ENCODE measurements at regions of chrX and their contacts with region 1.

Region 1: DNA sequence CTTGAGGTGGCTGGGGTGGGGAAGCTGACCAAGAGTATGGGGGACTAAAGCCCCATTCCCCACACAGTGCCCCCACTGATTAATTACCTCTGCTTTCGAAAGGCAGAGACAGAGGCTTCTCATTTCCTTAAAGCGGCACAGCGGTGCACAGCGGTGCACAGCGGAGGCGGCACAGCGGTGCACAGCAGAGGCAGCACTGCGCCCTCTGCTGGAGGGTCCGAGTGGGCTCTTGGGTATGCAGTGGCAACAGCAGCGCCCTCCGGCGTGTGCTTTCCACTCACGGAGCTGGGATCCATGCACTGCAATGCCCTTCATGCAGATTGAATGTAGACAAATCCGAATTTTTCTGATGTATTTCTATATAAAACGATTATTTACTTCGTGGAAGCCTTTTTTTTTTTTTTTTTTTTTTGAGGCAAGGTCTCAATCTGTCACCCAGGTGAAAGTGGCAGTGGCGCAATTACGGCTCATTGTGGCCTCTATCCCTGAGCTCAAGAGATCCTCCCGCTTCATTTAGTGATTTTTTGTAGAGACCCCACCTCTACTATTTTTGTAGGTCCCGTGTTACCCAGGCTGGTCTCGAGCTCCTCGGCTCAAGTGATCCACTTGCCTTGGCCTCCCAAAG is 19.7 kb upstream of the PRPS2 start:
- H3K4me3 ChIP-seq: no peak overlapping the region
- H3K27ac ChIP-seq: no peak overlapping the region
- H3K4me1 ChIP-seq: no peaks in the 10 kb centered on the region
- CTCF ChIP-seq: peak; percentile 88

Region 2: GRCh38 chrX:12080265-12080664 is 691.3 kb before region 1 on chrX:
- CTCF ChIA-PET with region 1: interaction called, 14 read pairs
- POLR2A ChIA-PET with region 1: no interaction called
- H3K4me3 ChIP-seq: no peak overlapping the region
- H3K27ac ChIP-seq: peak overlapping the region; percentile 54; the same call in 1 of the 2 replicates
- H3K4me1 ChIP-seq: peaks cover 3% of the 10 kb centered on the region; the same call in 1 of the 2 replicates
- CTCF ChIP-seq: no peak

Region 3: GRCh38 chrX:12721042-12721441 is 50.5 kb before region 1 on chrX:
- CTCF ChIA-PET with region 1: interaction called, 13 read pairs
- POLR2A ChIA-PET with region 1: no interaction called
- H3K4me3 ChIP-seq: no peak overlapping the region
- H3K27ac ChIP-seq: no peak overlapping the region
- H3K4me1 ChIP-seq: no peaks in the 10 kb centered on the region
- CTCF ChIP-seq: no peak

Region 4: DNA sequence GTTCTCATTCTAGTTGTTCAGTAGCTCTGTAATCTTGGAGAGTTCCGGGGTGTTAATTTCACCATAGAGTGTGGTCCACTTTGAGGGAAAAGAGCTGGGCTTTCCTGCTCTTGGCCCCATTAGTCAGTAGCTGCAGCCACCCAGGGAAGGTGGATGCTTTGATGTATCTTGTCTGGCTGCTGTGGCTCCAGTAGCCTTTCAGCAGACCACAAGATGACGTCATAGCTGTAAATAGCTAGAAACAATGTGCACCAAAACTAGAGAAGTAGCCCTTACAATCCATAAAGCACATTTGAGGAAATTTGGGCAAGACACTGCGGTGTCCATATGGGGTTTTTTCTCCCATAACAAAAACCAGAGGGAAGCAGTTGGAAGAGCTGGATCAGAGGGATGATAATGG is 13.3 kb before region 1 on chrX:
- CTCF ChIA-PET with region 1: interaction called, 50 read pairs
- POLR2A ChIA-PET with region 1: interaction called, 3 read pairs
- H3K4me3 ChIP-seq: no peak overlapping the region
- H3K27ac ChIP-seq: no peak overlapping the region
- H3K4me1 ChIP-seq: no peaks in the 10 kb centered on the region
- CTCF ChIP-seq: no peak

Region 5: DNA sequence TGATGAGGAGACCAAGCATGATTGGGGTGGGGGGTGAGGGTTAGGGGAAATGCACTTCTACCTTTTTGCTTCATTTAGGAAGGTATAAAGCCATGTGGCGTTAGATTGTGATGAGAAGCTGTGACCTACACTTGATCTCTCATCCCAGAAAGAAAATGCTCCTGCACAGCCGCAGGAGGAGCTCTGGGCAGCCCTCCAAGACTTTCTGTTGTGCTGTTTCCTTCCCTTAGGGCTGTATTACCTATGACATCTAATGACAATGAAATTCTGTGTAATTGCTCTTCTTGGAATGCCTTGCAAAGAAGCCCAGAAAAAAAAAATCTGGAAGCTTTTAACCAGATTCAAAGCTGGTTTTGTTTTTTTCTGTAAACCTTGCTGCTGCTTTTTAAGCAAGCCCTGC is 33.1 kb after region 1 on chrX:
- CTCF ChIA-PET with region 1: interaction called, 5 read pairs
- POLR2A ChIA-PET with region 1: interaction called, 10 read pairs
- H3K4me3 ChIP-seq: no peak overlapping the region
- H3K27ac ChIP-seq: no peak overlapping the region
- H3K4me1 ChIP-seq: no peaks in the 10 kb centered on the region
- CTCF ChIP-seq: no peak

Region 6: GRCh38 chrX:12868747-12869146 is 97.2 kb after region 1 on chrX:
- CTCF ChIA-PET with region 1: no interaction called
- POLR2A ChIA-PET with region 1: no interaction called
- H3K4me3 ChIP-seq: no peak overlapping the region
- H3K27ac ChIP-seq: no peak overlapping the region
- H3K4me1 ChIP-seq: no peaks in the 10 kb centered on the region
- CTCF ChIP-seq: no peak